H1 (cell line): ENCODE measurements at regions of chr5 and their contacts with region 1.

Region 1: DNA sequence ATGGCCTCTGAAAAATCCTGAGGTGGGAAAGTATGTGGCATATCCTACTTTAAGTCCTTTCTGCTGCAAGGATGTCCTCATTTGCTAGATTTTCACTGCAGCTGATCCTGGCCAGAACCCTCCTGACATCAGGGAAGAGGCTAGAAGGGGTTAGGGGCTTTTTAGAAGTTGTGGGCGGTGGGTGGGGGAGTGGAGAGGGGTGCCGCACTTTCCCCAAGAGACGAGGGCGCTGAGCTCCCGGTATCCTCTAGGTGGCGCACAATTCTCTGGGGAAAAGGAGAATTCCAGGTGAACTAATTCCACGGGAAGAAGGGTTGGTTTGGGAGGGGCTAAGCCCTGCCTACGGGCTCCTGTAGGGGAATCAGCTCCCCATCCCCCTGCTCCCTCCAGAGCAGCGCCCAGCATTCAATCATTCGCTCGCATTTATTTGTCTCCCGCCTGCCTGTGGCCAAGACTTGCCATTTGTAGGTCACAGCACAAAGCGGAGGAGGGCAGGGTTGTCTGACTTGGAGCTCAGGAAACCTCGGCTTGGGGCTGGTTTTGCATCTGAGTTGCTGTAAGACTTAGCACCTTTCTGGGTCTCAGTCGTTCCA is 42.9 kb upstream of the HAND1 start:
- DNase-seq: peak; percentile 82 to 93
- H3K4me3 ChIP-seq: peak overlapping the region; percentile 16 to 58 (median 36); a peak in 7 of 8 replicates
- H3K27ac ChIP-seq: peak overlapping the region; percentile 65; the same call in 1 of the 2 replicates
- H3K4me1 ChIP-seq: peaks cover 0 to 7% (median under 1%) of the 10 kb centered on the region in 4 experiments; a peak in 4 of 7 replicates
- H3K27me3 ChIP-seq: peaks cover 0 to 4% (median 3%) of the 10 kb centered on the region in 4 experiments; a peak in 2 of 7 replicates
- CTCF ChIP-seq: peak; percentile 79 to 83 (median 80)
- EP300 ChIP-seq: no peak
- POLR2A ChIP-seq: no peak
- RAD21 ChIP-seq: peak; percentile 59 to 72

Region 2: GRCh38 chr5:154373729-154374179 is 147.2 kb before region 1 on chr5:
- CTCF ChIA-PET with region 1: no interaction called
- POLR2A ChIA-PET with region 1: no interaction called
- DNase-seq: no peak
- H3K4me3 ChIP-seq: no peak overlapping the region
- H3K27ac ChIP-seq: no peak overlapping the region
- H3K4me1 ChIP-seq: peaks cover 5 to 10% (median 7%) of the 10 kb centered on the region in 4 experiments; a peak in 6 of 7 replicates
- H3K27me3 ChIP-seq: no peaks in the 10 kb centered on the region
- CTCF ChIP-seq: no peak
- EP300 ChIP-seq: no peak
- POLR2A ChIP-seq: no peak
- RAD21 ChIP-seq: no peak

Region 3: DNA sequence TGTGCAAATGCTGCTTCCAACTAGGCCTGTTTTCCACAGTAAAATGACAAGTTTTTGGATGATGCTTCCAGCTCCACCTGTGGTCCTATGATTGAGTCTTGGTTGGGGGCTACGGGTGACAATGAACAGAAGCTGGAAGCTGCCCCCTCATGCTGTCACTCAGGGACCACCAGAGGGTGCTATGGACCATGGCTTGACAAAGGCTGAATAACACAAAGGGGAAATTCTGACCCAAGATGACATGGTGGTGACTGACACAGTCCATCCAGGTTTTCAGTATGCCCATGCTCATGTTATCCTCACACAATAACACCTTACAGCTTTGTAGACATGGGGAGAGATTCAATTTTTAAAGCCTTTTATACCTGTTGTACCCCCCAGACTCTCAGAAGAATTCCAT is 99.1 kb before region 1 on chr5:
- CTCF ChIA-PET with region 1: interaction called, 10 read pairs
- POLR2A ChIA-PET with region 1: interaction called, 3 read pairs
- DNase-seq: no peak
- H3K4me3 ChIP-seq: no peak overlapping the region
- H3K27ac ChIP-seq: no peak overlapping the region
- H3K4me1 ChIP-seq: peaks cover 0 to 4% (median 0%) of the 10 kb centered on the region in 4 experiments; a peak in 1 of 7 replicates
- H3K27me3 ChIP-seq: no peaks in the 10 kb centered on the region
- CTCF ChIP-seq: peak; percentile 71 to 83 (median 77)
- EP300 ChIP-seq: no peak
- POLR2A ChIP-seq: no peak
- RAD21 ChIP-seq: peak; percentile 87 to 88

Region 4: DNA sequence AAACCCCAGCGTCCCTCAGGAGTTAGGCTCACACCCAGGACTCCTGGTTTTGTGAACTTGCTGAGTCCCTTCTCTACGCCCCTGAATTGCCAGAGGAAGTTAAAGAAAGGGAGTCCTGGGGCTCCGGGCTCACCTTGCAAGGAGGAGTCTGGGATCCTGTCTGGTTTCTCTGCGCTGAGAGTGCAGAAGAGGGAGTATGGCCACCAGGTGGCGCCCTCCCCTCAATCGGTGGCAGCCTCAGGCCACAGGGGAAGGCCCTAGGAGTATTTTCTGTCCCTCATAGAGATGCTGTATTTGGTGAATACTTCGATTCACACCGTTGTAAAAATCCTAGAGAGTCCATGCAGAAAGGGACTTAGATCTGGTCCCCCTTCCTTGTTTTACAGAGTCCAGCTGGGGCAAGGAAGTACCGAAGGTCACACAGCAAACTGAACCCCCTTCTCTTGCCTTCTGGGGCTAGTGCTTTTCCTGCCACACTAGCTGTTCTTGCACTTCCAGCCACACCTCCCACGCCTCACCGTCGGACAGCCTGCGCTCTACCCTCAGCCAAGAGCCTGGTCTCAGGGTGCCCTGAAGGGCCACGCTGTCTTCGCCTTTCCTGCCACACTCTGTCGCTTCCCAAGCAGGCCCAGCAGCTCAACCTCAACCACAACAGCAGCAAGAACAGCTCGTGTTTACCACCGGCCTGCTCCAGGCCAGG is 53.2 kb before region 1 on chr5:
- CTCF ChIA-PET with region 1: interaction called, 61 read pairs
- POLR2A ChIA-PET with region 1: no interaction called
- DNase-seq: peak in 1 of 2 experiments; percentile 96
- H3K4me3 ChIP-seq: no peak overlapping the region
- H3K27ac ChIP-seq: no peak overlapping the region
- H3K4me1 ChIP-seq: peaks cover 0 to 6% (median 4%) of the 10 kb centered on the region in 4 experiments; a peak in 5 of 7 replicates
- H3K27me3 ChIP-seq: peaks cover 37 to 57% (median 48%) of the 10 kb centered on the region in 4 experiments
- CTCF ChIP-seq: peak; percentile 95 to 96 (median 95)
- EP300 ChIP-seq: no peak
- POLR2A ChIP-seq: no peak
- RAD21 ChIP-seq: peak; percentile 91 to 92

Region 5: DNA sequence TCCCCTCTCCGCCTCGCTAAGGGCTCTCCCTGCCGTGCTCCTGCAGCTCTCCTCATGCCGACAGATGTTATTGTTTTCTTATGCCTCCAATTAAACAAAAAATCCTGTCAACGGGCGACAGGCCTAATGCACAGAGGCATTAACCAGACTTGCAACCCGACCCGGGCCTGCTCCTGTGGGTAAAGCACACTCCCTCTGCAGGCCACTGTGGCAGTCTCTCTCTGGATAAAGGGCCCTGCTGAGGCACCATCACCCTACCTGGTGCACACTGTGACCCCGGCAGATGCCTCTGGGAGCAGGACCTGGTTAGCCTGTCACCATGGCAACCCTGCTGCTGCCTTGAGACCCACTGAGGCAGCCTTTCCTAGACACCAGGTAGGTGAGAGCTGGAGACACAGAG is 15.3 kb before region 1 on chr5:
- CTCF ChIA-PET with region 1: interaction called, 87 read pairs
- POLR2A ChIA-PET with region 1: interaction called, 7 read pairs
- DNase-seq: no peak
- H3K4me3 ChIP-seq: no peak overlapping the region
- H3K27ac ChIP-seq: no peak overlapping the region
- H3K4me1 ChIP-seq: peaks cover 1 to 7% (median 4%) of the 10 kb centered on the region in 4 experiments; a peak in 4 of 7 replicates
- H3K27me3 ChIP-seq: no peaks in the 10 kb centered on the region
- CTCF ChIP-seq: peak; percentile 21 to 45 (median 31); a peak in 3 of 4 replicates
- EP300 ChIP-seq: no peak
- POLR2A ChIP-seq: no peak
- RAD21 ChIP-seq: no peak; a peak in 1 of 4 replicates

Region 6: DNA sequence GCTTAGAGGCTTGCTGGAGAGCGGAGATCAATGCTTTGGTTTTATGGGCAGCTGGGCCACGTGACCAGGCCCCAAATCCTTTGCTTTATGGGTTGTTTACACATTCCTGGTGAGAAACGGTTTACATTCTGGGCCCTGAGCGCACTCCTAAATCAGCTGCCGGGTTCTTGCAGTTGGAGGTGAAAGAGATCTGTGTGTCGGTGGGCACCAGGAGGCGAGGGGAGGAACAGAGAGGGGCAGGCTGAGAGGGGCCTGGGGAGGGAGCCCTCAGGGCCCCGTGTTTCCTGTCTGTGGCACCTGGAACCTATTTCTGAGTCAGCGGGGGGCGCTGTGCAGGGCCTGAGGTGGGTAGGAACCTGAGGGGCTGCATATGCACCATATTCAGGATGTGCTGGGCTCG is 20.6 kb after region 1 on chr5:
- CTCF ChIA-PET with region 1: interaction called, 23 read pairs
- POLR2A ChIA-PET with region 1: interaction called, 4 read pairs
- DNase-seq: peak in 1 of 2 experiments; percentile 77
- H3K4me3 ChIP-seq: no peak overlapping the region
- H3K27ac ChIP-seq: no peak overlapping the region
- H3K4me1 ChIP-seq: peaks cover 0 to 3% (median 1%) of the 10 kb centered on the region in 4 experiments; a peak in 3 of 7 replicates
- H3K27me3 ChIP-seq: 0 out of 7 replicates have a peak, but pooled peaks cover 0 to 2% (median 0%) of the 10 kb centered on the region in 4 experiments
- CTCF ChIP-seq: peak; percentile 59 to 65 (median 63)
- EP300 ChIP-seq: no peak
- POLR2A ChIP-seq: no peak
- RAD21 ChIP-seq: peak; percentile 31 to 45

Region 7: GRCh38 chr5:154603978-154604679 is 83.2 kb after region 1 on chr5:
- CTCF ChIA-PET with region 1: interaction called, 62 read pairs
- POLR2A ChIA-PET with region 1: interaction called, 6 read pairs
- DNase-seq: peak in 1 of 2 experiments; percentile 57
- H3K4me3 ChIP-seq: peak overlapping the region in 1 of 4 experiments; percentile 37; a peak in 1 of 8 replicates
- H3K27ac ChIP-seq: no peak overlapping the region
- H3K4me1 ChIP-seq: peaks cover 2 to 7% (median 5%) of the 10 kb centered on the region in 4 experiments; a peak in 4 of 7 replicates
- H3K27me3 ChIP-seq: peaks cover 0 to 15% (median 12%) of the 10 kb centered on the region in 4 experiments; a peak in 5 of 7 replicates
- CTCF ChIP-seq: no peak
- EP300 ChIP-seq: no peak
- POLR2A ChIP-seq: no peak
- RAD21 ChIP-seq: no peak

Region 8: GRCh38 chr5:154627698-154628678 is 107.0 kb after region 1 on chr5:
- CTCF ChIA-PET with region 1: interaction called, 13 read pairs
- POLR2A ChIA-PET with region 1: no interaction called
- DNase-seq: no peak
- H3K4me3 ChIP-seq: no peak overlapping the region
- H3K27ac ChIP-seq: peak overlapping the region; percentile 26; the same call in 1 of the 2 replicates
- H3K4me1 ChIP-seq: no peaks in the 10 kb centered on the region; a peak in 1 of 7 replicates
- H3K27me3 ChIP-seq: no peaks in the 10 kb centered on the region
- CTCF ChIP-seq: no peak
- EP300 ChIP-seq: no peak
- POLR2A ChIP-seq: no peak
- RAD21 ChIP-seq: no peak